ENCODE measurements at regions of chr1 and their contacts with region 1.

Region 1: GRCh38 chr1:27365372-27366112 is 1.2 kb downstream of the MAP3K6 start:
- DNase-seq: peak; percentile 92
- ATAC-seq: peak; percentile 68
- H3K4me3 Mint-ChIP-seq: peak overlapping the region; percentile 75
- H3K27ac Mint-ChIP-seq: peak overlapping the region; percentile 73
- H3K4me1 Mint-ChIP-seq: peaks cover 30% of the 10 kb centered on the region
- H3K27me3 Mint-ChIP-seq: no peaks in the 10 kb centered on the region

Region 2: GRCh38 chr1:27275696-27276095 is 89.8 kb before region 1 on chr1:
- CTCF ChIA-PET with region 1: no interaction called
- POLR2A ChIA-PET with region 1: no interaction called
- intact Hi-C with region 1: no loop called
- DNase-seq: no peak
- ATAC-seq: no peak
- H3K4me3 Mint-ChIP-seq: no peak overlapping the region
- H3K27ac Mint-ChIP-seq: no peak overlapping the region
- H3K4me1 Mint-ChIP-seq: peaks cover 2% of the 10 kb centered on the region
- H3K27me3 Mint-ChIP-seq: no peaks in the 10 kb centered on the region

Region 3: DNA sequence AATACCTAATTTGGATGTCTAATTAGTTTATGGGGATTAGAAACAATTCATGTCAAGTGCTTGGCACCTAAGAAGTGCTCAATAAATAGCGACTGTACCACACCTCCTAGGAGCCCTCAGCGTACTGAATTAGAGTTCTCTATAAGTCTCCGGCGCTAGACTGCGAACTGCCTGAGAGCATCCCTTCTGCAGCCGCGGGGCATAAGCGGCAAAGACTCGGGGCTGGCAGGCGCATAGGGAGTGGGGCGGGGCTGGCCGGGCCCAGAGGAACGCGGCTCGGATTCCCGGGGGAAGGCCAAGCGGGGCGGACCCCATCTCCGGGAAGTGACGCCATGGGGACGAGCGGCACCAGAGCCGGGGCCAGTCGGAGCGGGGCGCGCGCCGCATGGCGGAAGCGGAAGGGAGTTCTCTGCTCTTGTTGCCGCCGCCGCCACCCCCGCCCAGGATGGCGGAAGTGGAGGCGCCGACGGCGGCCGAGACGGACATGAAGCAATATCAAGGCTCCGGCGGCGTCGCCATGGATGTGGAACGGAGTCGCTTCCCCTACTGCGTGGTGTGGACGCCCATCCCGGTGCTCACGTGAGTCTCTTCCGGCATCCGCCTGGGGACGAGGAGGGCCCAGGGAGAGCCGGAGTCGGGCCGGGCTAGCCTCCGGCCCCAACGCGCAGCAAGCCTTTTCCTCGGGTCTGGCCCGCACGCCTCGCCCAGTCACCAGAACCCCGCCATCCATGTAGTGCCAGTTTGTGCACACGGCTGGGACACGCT is 43.5 kb before region 1 on chr1 and contains the start of gene TMEM222:
- CTCF ChIA-PET with region 1: interaction called, 6 read pairs
- POLR2A ChIA-PET with region 1: interaction called, 15 read pairs
- intact Hi-C with region 1: loop called in 1 of 2 experiments (anchors 1 kb)
- DNase-seq: peak; percentile 99
- ATAC-seq: peak; percentile 98
- H3K4me3 Mint-ChIP-seq: peak within 1 kb of the TSS; percentile 94
- H3K27ac Mint-ChIP-seq: peak within 1 kb of the TSS; percentile 90
- H3K4me1 Mint-ChIP-seq: peaks cover 41% of the 10 kb centered on the region
- H3K27me3 Mint-ChIP-seq: no peaks in the 10 kb centered on the region
- total RNA-seq, gene TMEM222: 27.5 to 31.2 TPM

Region 4: DNA sequence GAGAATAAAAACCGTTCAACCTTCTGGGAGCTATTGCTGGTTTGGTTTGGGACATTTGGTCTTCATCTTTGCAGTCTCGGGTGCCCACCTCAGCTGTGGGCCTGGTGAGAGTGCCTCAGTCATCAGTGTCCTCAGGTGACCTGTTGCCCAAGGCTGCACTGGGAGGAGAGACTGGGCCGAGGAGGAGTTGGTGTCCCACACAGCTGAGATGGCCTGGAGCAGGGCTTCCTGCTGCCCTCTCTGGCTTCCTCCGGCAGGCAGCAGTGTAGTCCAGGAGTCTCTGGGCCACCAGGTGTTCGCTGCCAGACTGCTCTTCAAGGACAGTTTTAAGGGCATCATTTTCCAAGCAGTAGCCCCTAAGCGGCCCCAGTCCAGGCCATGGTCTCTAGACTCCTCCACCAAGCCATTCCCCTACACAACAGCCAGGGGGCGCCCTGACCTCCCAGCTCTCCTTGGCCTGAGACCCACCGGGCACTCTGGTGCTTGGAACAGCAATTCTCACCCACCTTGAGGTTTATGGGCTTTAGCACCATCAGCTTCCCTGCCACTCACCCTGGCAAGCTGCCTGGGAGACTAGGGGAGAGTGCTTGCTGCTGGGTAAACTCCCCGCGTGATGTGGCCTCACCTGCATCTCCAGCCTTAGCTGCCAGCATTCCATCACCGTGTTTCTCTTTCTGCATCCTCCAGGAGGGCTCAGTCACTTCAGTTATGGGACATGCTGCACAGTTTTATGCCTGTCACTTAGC is 32.8 kb before region 1 on chr1:
- CTCF ChIA-PET with region 1: interaction called, 16 read pairs
- POLR2A ChIA-PET with region 1: no interaction called
- intact Hi-C with region 1: no loop called
- DNase-seq: peak; percentile 72
- ATAC-seq: peak; percentile 91
- H3K4me3 Mint-ChIP-seq: no peak overlapping the region
- H3K27ac Mint-ChIP-seq: no peak overlapping the region
- H3K4me1 Mint-ChIP-seq: peaks cover 27% of the 10 kb centered on the region
- H3K27me3 Mint-ChIP-seq: no peaks in the 10 kb centered on the region

Region 5: DNA sequence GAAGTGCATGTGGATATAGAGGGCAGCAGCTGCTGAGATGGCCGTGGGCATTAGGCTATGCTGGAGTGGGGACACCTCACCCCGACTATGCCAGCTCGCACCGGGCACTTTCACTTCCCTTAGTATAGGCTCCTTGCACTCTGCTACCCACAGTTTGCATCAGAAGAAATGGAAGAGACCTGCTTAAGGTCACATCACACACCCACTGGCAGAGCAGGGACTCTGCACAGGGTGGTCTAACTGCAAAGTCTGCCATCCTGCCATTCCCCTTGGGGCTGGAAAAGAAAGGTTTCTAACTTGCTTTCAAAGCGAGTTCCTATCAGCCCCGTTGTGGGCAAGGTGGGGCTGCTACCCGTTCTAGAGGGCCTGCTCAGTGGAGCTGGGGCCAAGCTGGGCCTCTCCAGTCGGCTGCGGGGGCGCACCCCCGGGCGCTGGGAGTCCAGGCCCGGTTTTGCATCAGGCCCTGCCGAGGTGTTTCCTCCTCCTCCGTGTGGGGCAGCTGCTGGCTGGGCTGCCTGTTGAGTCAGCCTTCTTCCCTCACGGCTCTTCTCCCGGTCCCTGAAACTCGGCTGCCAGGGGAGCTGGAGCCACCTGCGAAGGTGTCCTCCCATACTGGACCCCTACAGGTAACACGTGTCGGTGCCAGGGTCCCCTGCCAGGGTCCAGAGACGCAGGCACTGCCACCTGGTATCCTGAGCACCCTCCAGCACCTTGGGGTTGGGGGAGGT is 23.9 kb before region 1 on chr1 and contains the start of gene SYTL1:
- CTCF ChIA-PET with region 1: interaction called, 4 read pairs
- POLR2A ChIA-PET with region 1: interaction called, 3 read pairs
- intact Hi-C with region 1: loop called in 1 of 2 experiments (anchors 1 kb)
- DNase-seq: peak; percentile 83
- ATAC-seq: peak; percentile 63
- H3K4me3 Mint-ChIP-seq: peak within 1 kb of the TSS; percentile 78
- H3K27ac Mint-ChIP-seq: peak within 1 kb of the TSS; percentile 86
- H3K4me1 Mint-ChIP-seq: peaks cover 51% of the 10 kb centered on the region
- H3K27me3 Mint-ChIP-seq: no peaks in the 10 kb centered on the region
- total RNA-seq, gene SYTL1: 21.4 to 26.1 TPM

Region 6: GRCh38 chr1:27383039-27383605 is 17.6 kb after region 1 on chr1 and contains the start of gene CD164L2:
- CTCF ChIA-PET with region 1: interaction called, 17 read pairs
- POLR2A ChIA-PET with region 1: no interaction called
- intact Hi-C with region 1: loop called in 1 of 2 experiments (anchors 1 kb)
- DNase-seq: peak; percentile 70
- ATAC-seq: peak; percentile 79
- H3K4me3 Mint-ChIP-seq: no peak within 1 kb of the TSS
- H3K27ac Mint-ChIP-seq: no peak within 1 kb of the TSS
- H3K4me1 Mint-ChIP-seq: no peaks in the 10 kb centered on the region
- H3K27me3 Mint-ChIP-seq: no peaks in the 10 kb centered on the region
- total RNA-seq, gene CD164L2: not detected